Posterior vena cava (tissue), 2 donors: ENCODE measurements at regions of chr16 and their contacts with region 1.

Region 1: DNA sequence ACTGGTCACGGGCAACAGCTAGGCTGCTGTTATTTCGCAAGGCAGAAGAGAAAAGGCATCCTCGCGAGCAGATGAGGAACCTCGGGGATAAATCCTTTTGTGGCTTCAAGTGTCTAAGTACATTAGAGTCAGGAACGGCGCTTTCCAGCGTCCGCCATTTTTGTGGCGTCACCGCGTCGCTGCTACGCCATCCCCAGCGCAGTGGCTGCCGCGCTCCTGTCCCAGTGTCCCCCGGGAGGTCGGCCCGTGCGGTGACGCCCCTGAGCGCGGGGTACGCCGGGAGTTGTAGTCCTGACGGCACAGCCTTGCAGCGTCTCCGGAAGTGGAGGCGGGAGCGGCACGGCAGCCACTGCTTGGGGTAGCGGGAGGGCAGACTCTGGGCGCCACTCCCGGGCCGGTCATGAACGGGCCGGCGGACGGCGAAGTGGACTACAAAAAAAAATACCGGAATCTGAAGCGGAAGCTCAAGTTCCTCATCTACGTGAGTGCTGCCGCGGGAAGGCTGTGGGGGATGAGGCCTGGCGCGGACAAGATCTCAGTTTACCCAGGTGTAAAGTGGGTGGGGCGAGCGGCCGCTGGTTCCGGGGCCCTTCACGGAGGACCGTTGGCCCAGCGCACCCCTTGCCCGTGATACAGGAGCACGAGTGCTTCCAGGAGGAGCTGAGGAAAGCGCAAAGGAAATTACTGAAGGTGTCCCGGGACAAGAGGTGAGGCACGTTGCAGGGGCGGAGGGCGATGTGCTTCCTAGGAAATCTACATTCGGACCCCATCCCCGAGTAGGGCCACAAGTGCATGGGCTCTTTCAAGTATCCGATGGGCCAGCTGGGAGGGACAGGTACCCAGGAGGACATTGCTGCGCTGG is at the start of gene INO80E:
- DNase-seq: peak; percentile 100
- total RNA-seq, gene INO80E: 42.2 to 46.0 TPM

Region 2: DNA sequence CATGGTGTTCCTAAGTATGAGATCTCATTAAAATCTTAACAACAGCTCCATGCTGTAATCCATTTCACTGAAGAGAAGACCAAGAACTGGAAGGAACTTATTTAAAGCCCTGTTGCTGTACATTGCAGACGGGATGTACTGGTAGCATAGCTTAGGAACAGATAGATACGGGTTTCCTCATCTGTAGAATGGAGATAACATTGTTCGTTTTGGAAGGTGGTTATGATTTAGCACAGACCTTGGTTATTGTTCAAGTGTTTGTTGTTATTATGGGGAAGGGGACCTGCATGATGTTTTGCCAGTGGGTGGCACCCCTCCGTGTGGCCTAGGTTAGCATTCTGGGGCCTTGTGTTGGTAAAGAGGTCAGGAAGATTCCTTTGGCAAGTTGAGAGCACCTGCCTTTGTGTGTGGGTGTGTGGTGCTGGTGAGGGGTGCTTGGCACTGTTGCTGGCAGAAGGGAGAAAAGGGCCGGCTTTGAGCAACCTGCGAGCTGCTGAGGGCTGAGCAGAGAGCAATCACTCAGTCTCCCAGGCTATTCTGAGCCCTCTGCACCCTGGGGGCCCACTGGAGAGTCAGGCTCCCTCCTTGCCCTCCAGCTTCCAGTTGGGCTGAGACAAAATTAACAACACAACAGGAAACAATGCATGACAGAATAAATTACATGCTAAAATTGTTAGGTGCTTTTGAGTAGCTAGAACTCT is 20.2 kb before region 1 on chr16:
- intact Hi-C with region 1: loop called in 1 of 2 experiments (anchors 2 kb)
- DNase-seq: peak; percentile 72

Region 3: DNA sequence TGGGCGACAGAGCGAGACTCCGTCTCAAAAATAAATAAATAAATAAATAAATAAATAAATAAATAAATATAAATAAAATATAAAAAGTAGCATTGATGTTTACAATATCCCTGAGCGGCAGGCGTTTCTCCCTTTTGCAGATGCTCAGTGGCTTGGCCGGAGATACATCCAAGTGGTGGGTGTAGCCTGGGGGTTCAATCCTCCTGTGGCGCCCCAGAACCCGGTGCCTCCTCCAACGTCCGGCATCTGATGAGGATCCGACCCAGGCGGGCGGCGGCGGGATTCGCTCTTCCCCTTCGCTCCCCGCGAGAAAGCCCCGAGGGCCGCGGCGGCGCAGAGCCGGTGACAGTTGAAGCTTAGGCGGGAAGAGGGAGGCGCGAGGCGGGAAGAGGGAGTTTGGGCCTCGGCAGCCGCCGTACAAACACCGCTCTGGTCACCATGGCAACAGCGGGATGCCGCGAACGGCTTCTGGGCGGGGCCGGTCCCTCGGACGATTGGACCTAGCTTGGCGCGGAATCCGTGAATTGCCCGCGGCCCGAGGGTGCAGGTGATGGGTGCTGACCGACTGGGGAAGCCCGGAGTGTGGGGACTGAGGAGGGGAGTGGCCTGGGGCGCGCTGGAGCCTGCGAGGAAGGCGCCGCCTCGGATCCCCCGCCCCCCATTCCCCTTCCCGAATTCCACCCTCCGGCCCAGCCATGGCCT is 56.7 kb after region 1 on chr16:
- intact Hi-C with region 1: no loop called
- DNase-seq: peak; percentile 99